Right lobe of liver (tissue), 6 donors: ENCODE measurements at regions of chr20 and their contacts with region 1.

Region 1: GRCh38 chr20:1816384-1817381 is 78.5 kb upstream of the SIRPA start:
- DNase-seq: peak in 2 of 3 donors; percentile 33 to 47
- ATAC-seq: peak in 3 of 4 donors; percentile 34 to 48 (median 45)
- H3K4me3 ChIP-seq: no peak overlapping the region
- H3K27ac ChIP-seq: no peak overlapping the region
- H3K4me1 ChIP-seq: peaks cover 0 to 26% (median 2%) of the 10 kb centered on the region in 4 donors
- H3K27me3 ChIP-seq: no peaks in the 10 kb centered on the region
- CTCF ChIP-seq: no peak
- POLR2A ChIP-seq: no peak

Region 2: DNA sequence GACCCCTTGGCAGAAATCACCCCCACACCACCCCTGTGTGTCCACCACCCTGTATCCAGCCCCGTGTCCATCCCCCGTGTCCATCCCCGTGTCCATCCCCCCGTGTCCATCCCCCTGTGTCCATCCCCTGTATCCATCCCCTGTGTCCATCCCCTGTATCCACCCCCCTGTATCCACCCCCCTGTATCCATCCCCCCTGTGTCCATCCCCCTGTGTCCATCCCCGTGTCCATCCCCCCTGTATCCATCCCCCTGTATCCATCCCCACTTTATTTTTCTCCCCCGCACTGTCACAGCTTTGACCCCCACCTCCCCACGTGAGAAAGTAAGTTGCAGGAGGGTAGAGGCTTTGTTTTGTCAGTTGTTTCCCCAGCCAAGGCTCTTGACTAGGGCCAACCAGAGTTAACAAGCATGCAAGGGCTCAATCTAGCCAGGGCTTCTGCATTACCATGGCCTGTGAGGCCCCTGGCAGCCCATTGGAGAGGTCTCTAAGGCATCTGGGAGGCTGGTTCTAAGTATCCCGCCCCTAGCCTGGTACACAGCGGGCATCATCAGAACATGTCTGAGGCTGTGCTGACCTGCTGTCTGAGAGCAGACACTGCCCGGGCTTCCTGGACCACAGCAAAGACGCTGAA is 60.4 kb after region 1 on chr20:
- intact Hi-C with region 1: loop called (anchors 10 kb)
- DNase-seq: no peak
- ATAC-seq: no peak
- H3K4me3 ChIP-seq: no peak overlapping the region
- H3K27ac ChIP-seq: no peak overlapping the region
- H3K4me1 ChIP-seq: peaks cover 0 to 40% (median 16%) of the 10 kb centered on the region in 4 donors
- H3K27me3 ChIP-seq: no peaks in the 10 kb centered on the region
- CTCF ChIP-seq: no peak
- POLR2A ChIP-seq: no peak

Region 3: DNA sequence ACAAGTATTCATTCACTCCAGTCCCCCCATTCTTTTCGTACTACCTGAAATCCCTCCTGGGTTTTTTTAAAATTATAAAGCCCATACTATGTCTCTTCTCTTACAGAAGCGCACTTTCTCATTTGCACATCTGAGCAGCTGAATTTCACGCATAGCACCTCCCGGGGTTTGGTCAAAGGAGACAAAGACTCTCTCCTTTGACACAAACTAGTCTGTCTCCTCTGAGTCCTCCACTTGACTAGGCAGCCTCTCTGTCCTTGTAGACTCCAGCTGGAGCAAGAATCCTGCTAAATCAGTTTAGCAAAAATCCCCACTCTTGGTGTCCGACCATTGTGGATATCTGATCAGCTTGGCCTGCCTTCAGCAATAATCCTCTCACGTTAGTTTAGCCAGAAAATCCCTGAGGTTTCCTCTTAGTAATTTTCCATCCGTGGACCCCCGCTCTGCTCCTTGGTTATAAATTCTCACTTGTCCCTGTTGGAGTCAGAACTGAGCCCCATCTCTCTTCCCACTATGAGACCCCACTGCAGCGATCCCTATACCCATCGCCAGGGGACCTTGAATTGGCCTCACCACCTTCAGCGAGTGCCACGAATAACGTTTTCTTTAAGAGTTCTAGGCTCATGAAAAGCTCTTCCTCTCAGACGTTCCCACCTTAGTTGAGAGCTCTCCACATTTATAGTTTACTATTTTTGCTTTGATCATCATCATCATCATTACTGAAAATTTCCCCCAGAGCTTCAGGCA is 148.1 kb after region 1 on chr20:
- intact Hi-C with region 1: no loop called
- DNase-seq: no peak
- ATAC-seq: no peak
- H3K4me3 ChIP-seq: no peak overlapping the region
- H3K27ac ChIP-seq: no peak overlapping the region
- H3K4me1 ChIP-seq: peaks cover 0 to 8% (median 0%) of the 10 kb centered on the region in 4 donors
- H3K27me3 ChIP-seq: no peaks in the 10 kb centered on the region
- CTCF ChIP-seq: no peak
- POLR2A ChIP-seq: no peak